Dorsolateral prefrontal cortex (tissue), 120 donors: ENCODE measurements at regions of chr14 and their contacts with region 1.

Region 1: GRCh38 chr14:22319526-22320361 is 269.3 kb downstream of the DAD1 start:
- DNase-seq: peak in 7 of 10 donors; percentile 14 to 88 (median 57)
- H3K4me3 ChIP-seq: peak overlapping the region in 1 of 59 donors; percentile 3
- H3K27ac ChIP-seq: peak overlapping the region in 4 of 59 donors; percentile 0 to 31 (median 16)
- H3K27me3 ChIP-seq: peaks cover 0 to 6% (median 0%) of the 10 kb centered on the region in 45 donors
- CTCF ChIP-seq: peak; percentile 52 to 87 (median 78)

Region 2: DNA sequence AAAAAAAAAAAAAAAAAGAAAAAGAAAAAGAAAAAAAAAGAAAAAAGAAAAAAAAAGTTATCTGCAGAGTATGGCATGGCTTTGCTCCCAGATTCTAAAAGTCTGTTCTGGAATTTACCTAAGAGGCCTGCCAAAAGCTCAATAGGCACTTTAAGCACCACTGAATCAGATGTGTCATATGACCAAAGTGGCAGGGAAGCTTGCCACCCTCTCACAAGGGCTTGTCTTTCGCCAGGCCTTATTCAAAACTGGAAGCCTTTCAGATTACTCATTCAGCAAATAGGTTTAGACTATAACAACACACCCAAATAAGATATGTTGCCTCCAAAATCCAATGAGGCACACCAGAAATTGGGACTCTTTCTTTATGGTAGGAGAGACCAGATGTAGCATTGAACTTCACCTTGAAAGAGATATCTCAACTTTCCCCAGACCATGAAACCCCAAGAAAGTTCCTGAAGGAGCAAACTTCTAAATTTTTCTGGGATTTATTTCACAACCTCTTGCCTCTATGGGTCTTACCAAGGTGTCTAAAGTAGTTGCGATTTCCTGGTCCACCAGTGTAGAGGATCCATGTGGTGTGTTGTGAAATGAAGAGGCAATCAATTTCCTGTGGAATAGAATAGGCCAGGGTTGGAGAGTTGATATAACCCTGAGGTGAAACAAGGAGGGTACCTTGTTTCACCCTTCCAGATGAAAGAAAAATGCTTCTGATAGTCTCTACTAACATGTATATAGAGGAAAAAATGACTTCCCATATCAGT is 50.5 kb after region 1 on chr14:
- intact Hi-C with region 1: loop called (anchors 2 to 5 kb)
- DNase-seq: no peak
- H3K4me3 ChIP-seq: no peak overlapping the region
- H3K27ac ChIP-seq: peak overlapping the region in 1 of 59 donors; percentile 24
- H3K27me3 ChIP-seq: no peaks in the 10 kb centered on the region
- CTCF ChIP-seq: no peak

Region 3: DNA sequence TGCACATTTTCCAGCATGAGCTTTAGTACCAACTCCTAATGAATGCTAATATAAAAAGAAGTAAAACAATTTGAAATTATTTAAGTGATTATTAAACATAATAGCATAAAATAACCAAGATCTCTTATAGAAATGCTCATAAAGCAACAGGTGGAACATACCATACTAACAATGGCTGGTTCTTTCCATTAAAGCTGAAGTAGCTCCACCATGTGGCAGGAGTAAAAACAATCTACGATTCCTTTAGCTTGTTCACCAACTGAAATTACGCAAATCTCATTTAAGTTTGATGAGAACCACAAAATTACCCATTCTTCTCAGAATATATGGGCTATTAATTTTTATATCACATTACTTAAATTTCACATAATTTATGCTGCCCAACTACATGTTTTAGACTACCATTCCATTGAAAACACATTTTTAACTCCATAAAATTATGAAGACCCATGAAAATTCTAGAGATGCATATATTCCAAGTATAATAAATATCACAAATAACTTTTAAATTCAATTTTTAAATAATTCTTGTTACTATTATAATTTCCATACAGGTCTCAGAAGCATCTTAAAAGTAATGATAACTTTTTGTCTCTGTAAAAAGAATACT is 55.7 kb after region 1 on chr14:
- intact Hi-C with region 1: loop called (anchors 2 to 5 kb)
- DNase-seq: no peak
- H3K4me3 ChIP-seq: no peak overlapping the region
- H3K27ac ChIP-seq: no peak overlapping the region
- H3K27me3 ChIP-seq: peaks cover 0 to 12% (median 0%) of the 10 kb centered on the region in 45 donors
- CTCF ChIP-seq: peak; percentile 25 to 91 (median 74)